Activated CD4-positive, alpha-beta T cell treated with anti-CD3 and anti-CD28 coated beads for 36 hours (primary cell): ENCODE measurements at regions of chr14 and their contacts with region 1.

Region 1: DNA sequence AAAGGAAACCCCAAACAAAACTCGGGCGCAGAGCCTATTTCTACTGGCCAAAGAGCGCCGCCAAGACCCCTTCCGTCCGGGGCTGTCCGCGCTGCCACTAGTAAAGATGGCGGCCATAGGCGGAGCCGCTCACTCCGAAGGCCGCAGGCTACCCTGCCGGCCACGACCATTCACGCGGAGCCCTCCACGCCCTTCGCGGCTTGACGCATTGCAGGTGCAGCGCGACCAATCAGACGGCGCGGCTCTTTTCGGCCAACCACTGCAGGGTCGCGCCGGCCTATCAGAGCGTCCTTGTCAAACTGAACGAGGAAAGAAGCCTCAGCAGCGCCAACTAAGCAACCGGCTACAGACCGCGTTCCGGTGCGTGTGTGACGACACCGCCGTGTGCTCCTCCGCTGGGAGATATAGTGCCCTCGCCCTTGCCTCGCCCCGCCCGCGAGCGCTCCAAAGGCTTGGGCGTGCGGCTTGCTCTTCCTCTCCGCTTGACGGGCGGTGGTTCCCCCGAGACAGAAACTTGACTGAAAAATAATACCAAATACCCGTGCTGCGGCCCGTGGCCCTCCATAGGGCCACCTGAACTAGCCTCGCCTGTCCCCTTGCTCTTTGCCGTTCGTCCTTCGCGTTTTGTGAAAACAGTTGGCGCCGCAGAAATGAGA is 13.6 kb upstream of the CALM1 start:
- DNase-seq: peak; percentile 99
- ATAC-seq: peak; percentile 89
- H3K4me3 Mint-ChIP-seq: no peak overlapping the region
- H3K27ac Mint-ChIP-seq: no peak overlapping the region
- H3K4me1 Mint-ChIP-seq: peaks cover 27% of the 10 kb centered on the region
- H3K27me3 Mint-ChIP-seq: no peaks in the 10 kb centered on the region

Region 2: GRCh38 chr14:90159146-90159545 is 224.1 kb before region 1 on chr14:
- CTCF ChIA-PET with region 1: no interaction called
- POLR2A ChIA-PET with region 1: no interaction called
- intact Hi-C with region 1: no loop called
- DNase-seq: no peak
- ATAC-seq: no peak
- H3K4me3 Mint-ChIP-seq: no peak overlapping the region
- H3K27ac Mint-ChIP-seq: no peak overlapping the region
- H3K4me1 Mint-ChIP-seq: no peaks in the 10 kb centered on the region
- H3K27me3 Mint-ChIP-seq: peaks cover 21% of the 10 kb centered on the region

Region 3: DNA sequence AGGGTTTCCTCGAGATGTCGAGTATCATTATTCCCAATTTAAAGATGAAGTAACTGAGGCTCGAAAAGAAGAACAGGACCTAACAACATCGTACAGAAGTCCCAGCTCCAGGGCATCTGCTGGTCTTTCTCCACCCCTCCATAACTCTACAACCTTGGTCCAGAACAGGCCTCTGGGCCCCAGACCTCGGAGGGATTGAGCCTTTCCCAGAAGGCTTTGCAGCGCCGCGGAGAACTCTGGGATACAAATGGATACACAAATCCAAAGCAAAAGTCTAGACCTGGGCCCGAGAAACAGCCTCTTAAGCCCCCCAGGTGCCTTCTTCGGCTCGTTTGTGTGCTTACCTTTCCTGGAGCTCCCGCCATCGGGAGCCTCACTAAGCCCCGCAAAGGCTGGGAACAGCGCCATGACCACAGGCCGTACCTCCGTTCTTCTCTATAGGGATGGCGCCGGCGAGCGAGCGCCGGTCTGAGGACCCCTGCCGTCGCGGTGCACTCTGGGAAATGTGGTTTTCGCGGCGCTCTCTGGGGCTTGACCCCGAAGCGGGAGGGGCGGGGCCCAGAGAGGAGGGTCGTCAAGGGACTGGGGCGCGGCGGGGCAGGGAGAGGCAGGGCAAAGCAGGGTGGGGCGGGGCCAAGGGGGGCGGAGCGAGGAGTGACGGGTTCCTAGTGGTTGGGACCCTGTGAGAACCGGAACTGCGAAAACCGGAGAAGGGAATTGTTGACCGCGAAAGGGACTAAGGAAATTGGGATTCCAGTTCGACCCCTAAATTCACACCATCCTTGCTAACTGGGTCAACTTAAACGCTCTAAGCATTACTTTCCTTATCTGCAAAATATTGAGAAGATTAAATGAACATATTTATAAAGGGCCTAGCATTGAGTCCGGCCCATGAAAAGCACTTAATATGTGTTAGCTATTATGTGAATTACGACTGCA is 51.4 kb before region 1 on chr14 and contains the start of gene NRDE2:
- CTCF ChIA-PET with region 1: no interaction called
- POLR2A ChIA-PET with region 1: interaction called, 3 read pairs
- intact Hi-C with region 1: loop called (anchors 1 kb)
- DNase-seq: peak; percentile 99
- ATAC-seq: peak; percentile 99
- H3K4me3 Mint-ChIP-seq: peak within 1 kb of the TSS; percentile 89
- H3K27ac Mint-ChIP-seq: peak within 1 kb of the TSS; percentile 93
- H3K4me1 Mint-ChIP-seq: peaks cover 23% of the 10 kb centered on the region
- H3K27me3 Mint-ChIP-seq: peaks cover 2% of the 10 kb centered on the region
- total RNA-seq, gene NRDE2: 22.8 to 25.3 TPM

Region 4: GRCh38 chr14:90361865-90362557 is 21.2 kb before region 1 on chr14:
- CTCF ChIA-PET with region 1: no interaction called
- POLR2A ChIA-PET with region 1: no interaction called
- intact Hi-C with region 1: no loop called
- DNase-seq: no peak
- ATAC-seq: no peak
- H3K4me3 Mint-ChIP-seq: no peak overlapping the region
- H3K27ac Mint-ChIP-seq: no peak overlapping the region
- H3K4me1 Mint-ChIP-seq: no peaks in the 10 kb centered on the region
- H3K27me3 Mint-ChIP-seq: peaks cover 2% of the 10 kb centered on the region

Region 5: GRCh38 chr14:90475298-90475697 is 92.1 kb after region 1 on chr14:
- CTCF ChIA-PET with region 1: no interaction called
- POLR2A ChIA-PET with region 1: no interaction called
- intact Hi-C with region 1: no loop called
- DNase-seq: no peak
- ATAC-seq: no peak
- H3K4me3 Mint-ChIP-seq: no peak overlapping the region
- H3K27ac Mint-ChIP-seq: no peak overlapping the region
- H3K4me1 Mint-ChIP-seq: no peaks in the 10 kb centered on the region
- H3K27me3 Mint-ChIP-seq: peaks cover 12% of the 10 kb centered on the region

Region 6: DNA sequence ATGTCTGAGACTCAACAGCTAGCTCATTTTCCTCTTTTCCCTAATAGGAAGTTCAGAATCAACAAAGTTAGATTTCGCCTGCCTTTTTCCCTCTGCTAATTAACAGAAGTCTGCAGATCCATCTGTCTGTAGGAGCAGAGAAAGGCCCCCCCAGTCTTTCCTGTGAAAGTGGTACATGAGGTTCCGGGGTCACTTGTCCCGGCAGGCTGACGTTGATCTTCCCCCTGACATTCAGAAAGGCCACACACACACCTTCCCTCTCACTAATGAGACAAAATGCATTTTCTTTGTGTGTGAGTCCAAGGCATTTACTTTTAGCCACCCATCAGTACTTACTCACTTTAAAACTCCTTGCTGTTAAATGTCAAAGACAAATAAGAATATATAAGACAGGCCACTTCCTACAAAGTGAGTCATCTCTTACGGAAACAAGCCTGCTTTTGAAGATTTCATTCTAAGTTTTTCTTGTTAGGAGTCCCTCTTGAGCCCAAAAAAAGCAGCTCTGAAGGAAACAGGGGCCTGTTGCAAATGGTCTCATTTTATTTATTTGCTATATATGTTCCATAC is 294.4 kb after region 1 on chr14:
- CTCF ChIA-PET with region 1: no interaction called
- POLR2A ChIA-PET with region 1: no interaction called
- intact Hi-C with region 1: loop called in 1 of 2 experiments (anchors 5 kb)
- DNase-seq: peak; percentile 23
- ATAC-seq: peak; percentile 93
- H3K4me3 Mint-ChIP-seq: peak overlapping the region; percentile 33
- H3K27ac Mint-ChIP-seq: peak overlapping the region; percentile 89
- H3K4me1 Mint-ChIP-seq: peaks cover 38% of the 10 kb centered on the region
- H3K27me3 Mint-ChIP-seq: no peaks in the 10 kb centered on the region

Region 7: DNA sequence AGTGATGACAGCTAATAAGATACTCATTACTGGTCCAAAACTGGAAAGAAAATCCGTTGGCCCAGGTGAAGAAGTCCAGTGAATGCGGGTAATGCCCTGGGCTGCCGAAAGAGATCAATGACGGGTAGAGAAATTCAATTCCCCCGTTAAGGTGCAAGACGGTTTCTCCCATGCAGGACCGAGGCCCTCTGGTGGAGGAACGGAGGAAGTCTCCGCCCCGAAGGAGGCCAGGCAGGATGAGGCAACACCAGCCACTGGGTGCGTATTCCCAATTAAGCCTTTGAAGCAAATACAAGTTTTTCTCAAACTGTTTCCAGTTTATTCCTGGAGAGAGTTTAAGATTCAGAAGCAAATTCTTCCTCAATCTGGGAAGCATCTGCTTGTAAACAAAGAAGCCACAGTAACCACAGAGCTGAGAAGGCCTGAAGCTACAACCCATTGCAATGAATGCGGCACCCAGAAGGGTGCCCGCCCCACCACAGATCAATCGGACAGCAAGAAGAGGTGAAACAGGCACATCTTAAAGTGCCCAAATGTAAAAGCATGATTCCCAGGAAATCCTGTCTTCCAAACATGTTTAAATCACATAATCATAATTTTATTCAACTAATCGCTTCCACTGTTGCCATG is 314.5 kb after region 1 on chr14:
- CTCF ChIA-PET with region 1: no interaction called
- POLR2A ChIA-PET with region 1: no interaction called
- intact Hi-C with region 1: no loop called
- DNase-seq: peak; percentile 87
- ATAC-seq: peak; percentile 95
- H3K4me3 Mint-ChIP-seq: no peak overlapping the region
- H3K27ac Mint-ChIP-seq: no peak overlapping the region
- H3K4me1 Mint-ChIP-seq: no peaks in the 10 kb centered on the region
- H3K27me3 Mint-ChIP-seq: no peaks in the 10 kb centered on the region

Region 8: DNA sequence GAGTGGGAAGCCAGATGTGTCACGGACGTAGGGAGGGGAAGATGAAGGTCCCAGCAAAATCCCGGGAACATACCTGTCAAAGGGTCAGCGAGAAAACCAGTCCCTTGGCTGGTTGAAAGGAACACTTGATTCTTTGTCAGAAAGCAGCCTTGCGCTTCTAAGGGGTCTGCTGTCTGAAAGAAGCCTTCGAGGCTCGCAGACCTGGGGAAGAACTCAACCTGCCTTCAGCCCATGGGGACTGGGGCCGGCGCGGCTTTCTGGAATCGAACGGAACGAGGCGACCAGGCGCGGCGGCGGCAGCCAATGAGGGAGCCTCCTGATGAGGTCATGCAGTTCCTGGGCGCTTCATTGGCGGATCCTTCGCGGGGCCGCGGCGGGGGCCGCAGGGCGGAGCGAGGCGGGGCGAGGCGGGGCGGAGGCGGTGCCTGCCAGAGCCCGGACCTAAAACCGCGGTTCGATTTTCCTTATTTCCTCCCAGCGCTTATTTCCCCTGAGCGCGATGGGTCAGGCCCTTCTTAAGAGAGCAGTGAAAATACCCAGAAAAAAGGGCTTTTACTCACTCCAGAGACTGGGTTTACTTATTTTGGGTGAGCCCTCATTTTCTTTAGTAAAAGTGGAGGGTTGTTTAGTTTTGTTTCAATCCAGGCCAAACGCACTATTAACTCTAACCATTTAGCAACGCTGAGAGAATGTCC is 444.9 kb after region 1 on chr14:
- CTCF ChIA-PET with region 1: no interaction called
- POLR2A ChIA-PET with region 1: no interaction called
- intact Hi-C with region 1: loop called in 1 of 2 experiments (anchors 5 kb)
- DNase-seq: peak; percentile 95
- ATAC-seq: peak; percentile 99
- H3K4me3 Mint-ChIP-seq: peak overlapping the region; percentile 68
- H3K27ac Mint-ChIP-seq: peak overlapping the region; percentile 88
- H3K4me1 Mint-ChIP-seq: peaks cover 20% of the 10 kb centered on the region
- H3K27me3 Mint-ChIP-seq: no peaks in the 10 kb centered on the region

Region 9: GRCh38 chr14:91249841-91250616 is 866.8 kb after region 1 on chr14:
- CTCF ChIA-PET with region 1: no interaction called
- POLR2A ChIA-PET with region 1: no interaction called
- intact Hi-C with region 1: loop called in 1 of 2 experiments (anchors 5 kb)
- DNase-seq: peak; percentile 55
- ATAC-seq: no peak
- H3K4me3 Mint-ChIP-seq: peak overlapping the region; percentile 21
- H3K27ac Mint-ChIP-seq: peak overlapping the region; percentile 84
- H3K4me1 Mint-ChIP-seq: peaks cover 87% of the 10 kb centered on the region
- H3K27me3 Mint-ChIP-seq: no peaks in the 10 kb centered on the region